Right lobe of liver (tissue), 6 donors: ENCODE measurements at regions of chr19 and their contacts with region 1.

Region 1: DNA sequence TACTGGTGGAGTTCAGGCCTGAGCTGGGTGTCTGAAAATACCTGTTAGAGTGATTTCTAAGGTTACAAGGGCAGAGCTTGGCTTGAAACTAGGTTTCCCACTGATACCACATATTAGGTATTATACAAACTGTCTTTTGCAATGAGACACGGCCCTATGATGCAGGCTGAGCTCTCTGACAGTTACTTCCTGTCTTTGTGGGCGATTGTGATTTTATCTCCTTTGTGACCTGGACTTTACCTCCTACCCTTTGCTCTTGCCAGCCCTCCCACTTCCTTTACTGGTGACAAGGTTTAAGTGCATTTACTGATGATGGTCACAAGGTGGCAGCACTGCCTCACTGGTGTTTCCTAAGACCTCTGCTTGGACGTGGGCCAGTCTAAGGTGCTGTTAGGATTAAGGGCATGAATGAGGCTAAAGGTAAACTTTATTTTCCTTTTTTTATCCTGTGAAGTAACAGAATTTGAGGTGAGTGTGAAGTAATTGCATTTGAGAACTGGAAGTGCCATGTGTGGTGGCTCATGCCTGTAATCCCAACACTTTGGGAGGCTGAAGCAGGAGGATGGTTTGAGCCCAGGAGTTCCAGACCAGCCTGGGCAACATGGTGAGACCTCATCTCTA is 7.7 kb upstream of the CXCL17 start:
- DNase-seq: peak; percentile 81 to 92 (median 84)
- ATAC-seq: peak; percentile 97 to 99 (median 98)
- H3K4me3 ChIP-seq: no peak overlapping the region
- H3K27ac ChIP-seq: peak overlapping the region; percentile 66 to 90 (median 76)
- H3K4me1 ChIP-seq: peaks cover 2 to 13% (median 8%) of the 10 kb centered on the region in 4 donors
- H3K27me3 ChIP-seq: no peaks in the 10 kb centered on the region
- CTCF ChIP-seq: peak; percentile 85 to 99 (median 91)
- POLR2A ChIP-seq: peak; percentile 71

Region 2: DNA sequence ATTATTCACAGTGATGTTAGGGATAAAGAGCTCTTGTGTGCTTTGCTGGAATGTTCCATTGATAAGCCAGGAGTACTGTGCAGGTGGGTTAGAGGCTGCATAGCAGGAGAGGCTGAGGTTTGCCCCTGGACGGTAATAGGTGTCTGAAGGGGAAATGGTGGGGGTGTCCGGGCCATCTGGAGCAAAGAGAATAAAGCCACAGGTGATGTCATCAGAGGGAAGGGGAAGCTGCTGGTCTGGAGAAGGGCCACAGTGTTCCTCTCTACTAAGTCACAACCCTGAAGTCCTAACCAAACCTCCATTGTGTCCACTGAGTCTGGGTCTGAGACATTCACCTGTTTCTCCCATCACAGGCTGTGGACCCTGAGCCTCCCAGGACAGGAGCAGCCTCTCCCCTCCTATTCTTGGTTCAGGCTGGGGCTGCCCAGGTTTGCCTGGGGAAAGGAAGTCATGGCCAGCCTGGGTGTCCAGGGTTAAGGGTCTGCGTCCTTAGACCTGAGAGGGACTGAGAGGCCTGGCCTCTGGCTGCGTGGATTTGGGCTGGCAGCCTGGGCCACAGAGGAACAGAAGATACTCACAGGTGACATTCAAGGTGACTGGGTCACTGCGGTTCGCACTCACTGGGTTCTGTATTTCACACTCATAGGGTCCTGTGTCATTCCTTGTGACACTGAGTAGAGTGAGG is 71.1 kb after region 1 on chr19:
- intact Hi-C with region 1: loop called (anchors 5 kb)
- DNase-seq: no peak
- ATAC-seq: no peak
- H3K4me3 ChIP-seq: no peak overlapping the region
- H3K27ac ChIP-seq: no peak overlapping the region
- H3K4me1 ChIP-seq: peaks cover 0 to 10% (median 1%) of the 10 kb centered on the region in 4 donors
- H3K27me3 ChIP-seq: no peaks in the 10 kb centered on the region
- CTCF ChIP-seq: no peak
- POLR2A ChIP-seq: no peak

Region 3: DNA sequence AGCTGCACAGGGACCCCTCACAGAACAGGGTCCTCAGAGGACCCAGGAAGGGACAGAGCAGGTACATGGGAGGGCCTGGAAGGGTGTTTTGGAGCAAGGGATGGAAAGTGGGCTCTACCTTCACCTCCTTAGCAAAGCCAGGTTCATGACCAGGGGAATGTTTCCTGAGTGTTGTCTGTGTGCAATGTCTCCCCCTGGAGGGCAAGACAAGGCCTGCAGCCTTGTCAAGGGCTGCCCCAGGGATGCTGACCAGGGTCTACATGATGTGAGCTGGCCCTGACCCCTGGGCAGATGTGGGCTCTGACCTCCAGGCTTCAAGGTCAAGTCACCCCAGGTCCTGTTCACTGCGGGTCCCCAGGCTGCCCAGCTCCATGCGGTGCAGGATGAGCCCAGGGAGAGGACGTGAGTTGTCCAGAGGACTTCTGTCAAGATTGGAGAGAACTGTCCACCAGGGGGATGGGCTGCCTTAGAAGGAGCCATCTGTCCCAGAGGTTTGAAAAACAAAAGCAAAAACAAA is 78.9 kb after region 1 on chr19:
- intact Hi-C with region 1: loop called (anchors 5 kb)
- DNase-seq: peak; percentile 70 to 79 (median 77)
- ATAC-seq: peak; percentile 88 to 91 (median 90)
- H3K4me3 ChIP-seq: peak overlapping the region; percentile 41 to 58 (median 46)
- H3K27ac ChIP-seq: peak overlapping the region; percentile 88 to 93 (median 90)
- H3K4me1 ChIP-seq: peaks cover 0 to 32% (median 4%) of the 10 kb centered on the region in 4 donors
- H3K27me3 ChIP-seq: no peaks in the 10 kb centered on the region
- CTCF ChIP-seq: peak; percentile 92 to 97 (median 94)
- POLR2A ChIP-seq: no peak